CD8-positive, alpha-beta memory T cell (primary cell): ENCODE measurements at regions of chr19 and their contacts with region 1.

Region 1: DNA sequence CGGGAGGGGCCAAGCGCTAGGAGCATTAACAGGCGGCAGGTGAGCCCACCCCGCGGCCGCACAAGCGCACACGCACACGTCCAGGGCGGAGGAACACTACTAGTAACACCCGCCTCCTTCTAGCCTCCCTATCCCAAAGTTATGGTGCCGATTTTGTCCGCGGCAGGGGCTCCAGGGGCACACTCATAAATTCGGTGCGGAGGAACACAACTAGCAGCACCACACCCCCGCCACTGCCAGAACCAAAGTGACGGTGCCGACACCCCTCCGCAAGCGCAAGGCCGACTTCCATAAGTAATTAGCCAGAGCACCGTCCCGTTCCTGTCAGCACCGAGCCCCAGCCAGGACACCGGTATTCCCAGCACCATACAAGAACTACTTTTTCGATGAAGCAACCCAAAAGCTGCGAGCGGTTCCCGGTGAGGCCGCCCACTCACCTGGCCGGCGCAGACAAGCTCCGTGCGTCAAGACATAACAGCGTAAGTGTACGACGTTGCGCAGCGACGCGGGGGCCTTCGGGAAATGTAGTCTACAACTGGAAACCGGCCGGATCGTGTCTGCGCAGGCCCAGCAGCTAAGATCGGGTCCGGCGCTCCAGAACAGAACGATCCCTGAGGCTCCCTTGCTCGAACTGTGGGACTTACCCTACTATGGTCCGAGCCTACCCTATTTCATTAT is at the starts of genes ZNF540 and ZNF571:
- DNase-seq: peak; percentile 82 to 95 (median 87)
- H3K4me3 ChIP-seq: peak within 1 kb of the TSS; percentile 93
- H3K4me3 Mint-ChIP-seq: peak within 1 kb of the TSS; percentile 93 to 98 (median 96)
- H3K27ac ChIP-seq: peak within 1 kb of the TSS; percentile 93
- H3K27ac Mint-ChIP-seq: peak within 1 kb of the TSS; percentile 93 to 100 (median 98)
- H3K4me1 ChIP-seq: peaks cover 19% of the 10 kb centered on the region
- H3K4me1 Mint-ChIP-seq: peaks cover 33 to 57% (median 44%) of the 10 kb centered on the region in 3 donors
- H3K27me3 ChIP-seq: no peaks in the 10 kb centered on the region
- H3K27me3 Mint-ChIP-seq: peaks cover 0 to 4% of the 10 kb centered on the region in 2 donors
- total RNA-seq, gene ZNF540: 2.3 to 3.2 TPM
- total RNA-seq, gene ZNF571: 2.2 to 3.3 TPM

Region 2: GRCh38 chr19:37370880-37371661 is 223.4 kb before region 1 on chr19 and contains the start of gene ZNF527:
- CTCF ChIA-PET with region 1: no interaction called
- POLR2A ChIA-PET with region 1: interaction called, 12 read pairs
- DNase-seq: peak; percentile 95 to 97 (median 96)
- H3K4me3 ChIP-seq: peak within 1 kb of the TSS; percentile 84
- H3K4me3 Mint-ChIP-seq: peak within 1 kb of the TSS; percentile 91 to 100 (median 99)
- H3K27ac ChIP-seq: peak within 1 kb of the TSS; percentile 86
- H3K27ac Mint-ChIP-seq: peak within 1 kb of the TSS; percentile 84 to 99 (median 98)
- H3K4me1 ChIP-seq: peaks cover 13% of the 10 kb centered on the region
- H3K4me1 Mint-ChIP-seq: peaks cover 15 to 23% (median 19%) of the 10 kb centered on the region in 3 donors
- H3K27me3 ChIP-seq: no peaks in the 10 kb centered on the region
- H3K27me3 Mint-ChIP-seq: no peaks in the 10 kb centered on the region
- total RNA-seq, gene ZNF527: 5.2 to 5.6 TPM

Region 3: GRCh38 chr19:37466798-37467607 is 127.4 kb before region 1 on chr19 and contains the start of gene ZNF569:
- CTCF ChIA-PET with region 1: interaction called, 3 read pairs
- POLR2A ChIA-PET with region 1: interaction called, 15 read pairs
- DNase-seq: peak; percentile 78 to 93 (median 91)
- H3K4me3 ChIP-seq: peak within 1 kb of the TSS; percentile 94
- H3K4me3 Mint-ChIP-seq: peak within 1 kb of the TSS; percentile 87 to 99 (median 97)
- H3K27ac ChIP-seq: peak within 1 kb of the TSS; percentile 77
- H3K27ac Mint-ChIP-seq: peak within 1 kb of the TSS; percentile 89 to 98 (median 98)
- H3K4me1 ChIP-seq: peaks cover 24% of the 10 kb centered on the region
- H3K4me1 Mint-ChIP-seq: peaks cover 40 to 49% (median 47%) of the 10 kb centered on the region in 3 donors
- H3K27me3 ChIP-seq: no peaks in the 10 kb centered on the region
- H3K27me3 Mint-ChIP-seq: no peaks in the 10 kb centered on the region
- total RNA-seq, gene ZNF569: 7.4 to 8.0 TPM

Region 4: GRCh38 chr19:37506387-37507166 is 87.9 kb before region 1 on chr19 and contains the start of gene ZNF793:
- CTCF ChIA-PET with region 1: interaction called, 7 read pairs
- POLR2A ChIA-PET with region 1: interaction called, 22 read pairs
- DNase-seq: peak; percentile 63 to 89 (median 82)
- H3K4me3 ChIP-seq: peak within 1 kb of the TSS; percentile 67
- H3K4me3 Mint-ChIP-seq: no peak within 1 kb of the TSS
- H3K27ac ChIP-seq: peak within 1 kb of the TSS; percentile 86
- H3K27ac Mint-ChIP-seq: no peak within 1 kb of the TSS
- H3K4me1 ChIP-seq: peaks cover 9% of the 10 kb centered on the region
- H3K4me1 Mint-ChIP-seq: peaks cover 0 to 4% (median 0%) of the 10 kb centered on the region in 3 donors
- H3K27me3 ChIP-seq: no peaks in the 10 kb centered on the region
- H3K27me3 Mint-ChIP-seq: no peaks in the 10 kb centered on the region
- total RNA-seq, gene ZNF793: 3.9 to 4.1 TPM

Region 5: DNA sequence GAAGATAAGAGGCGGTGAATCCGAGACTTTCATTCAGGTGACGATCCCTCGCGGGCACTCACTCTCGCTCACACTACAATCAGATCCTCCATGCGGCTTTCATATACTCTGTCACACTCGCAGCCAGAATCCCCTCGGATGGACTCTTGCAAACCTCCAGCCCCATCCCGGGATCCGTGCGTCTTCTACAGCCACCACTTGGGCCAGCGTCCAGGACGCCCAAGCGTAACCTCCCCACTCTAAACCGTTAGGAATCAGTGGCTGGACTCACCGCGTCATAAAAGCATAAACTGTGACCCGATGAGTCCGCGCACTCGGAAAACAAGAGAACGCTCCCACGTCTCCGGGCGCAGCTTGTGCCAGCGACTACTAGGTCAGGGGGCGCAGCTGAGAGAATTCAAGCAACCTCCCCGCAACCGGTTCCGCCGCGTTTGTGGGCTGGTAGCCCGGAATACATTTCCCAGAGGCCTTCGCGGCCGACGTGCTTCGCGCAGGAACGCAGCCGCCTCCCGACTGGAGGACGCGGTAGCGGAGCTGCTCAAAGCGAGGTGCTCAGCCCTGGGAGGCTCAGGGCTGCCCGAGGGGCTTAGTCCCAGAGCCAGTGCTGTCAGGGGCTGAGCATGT is 97.5 kb after region 1 on chr19:
- CTCF ChIA-PET with region 1: no interaction called
- POLR2A ChIA-PET with region 1: interaction called, 10 read pairs
- DNase-seq: peak; percentile 47 to 86 (median 74)
- H3K4me3 ChIP-seq: peak overlapping the region; percentile 87
- H3K4me3 Mint-ChIP-seq: peak overlapping the region; percentile 86 to 94 (median 92)
- H3K27ac ChIP-seq: peak overlapping the region; percentile 60
- H3K27ac Mint-ChIP-seq: peak overlapping the region; percentile 72 to 95 (median 90)
- H3K4me1 ChIP-seq: no peaks in the 10 kb centered on the region
- H3K4me1 Mint-ChIP-seq: peaks cover 11 to 12% (median 11%) of the 10 kb centered on the region in 3 donors
- H3K27me3 ChIP-seq: no peaks in the 10 kb centered on the region
- H3K27me3 Mint-ChIP-seq: no peaks in the 10 kb centered on the region

Region 6: GRCh38 chr19:37779127-37780005 is 184.9 kb after region 1 on chr19 and contains the start of gene ZNF573:
- CTCF ChIA-PET with region 1: no interaction called
- POLR2A ChIA-PET with region 1: interaction called, 10 read pairs
- DNase-seq: peak; percentile 69 to 97 (median 84)
- H3K4me3 ChIP-seq: peak within 1 kb of the TSS; percentile 90
- H3K4me3 Mint-ChIP-seq: peak within 1 kb of the TSS; percentile 91 to 99 (median 97)
- H3K27ac ChIP-seq: peak within 1 kb of the TSS; percentile 77
- H3K27ac Mint-ChIP-seq: peak within 1 kb of the TSS; percentile 94 to 99 (median 98)
- H3K4me1 ChIP-seq: peaks cover 13% of the 10 kb centered on the region
- H3K4me1 Mint-ChIP-seq: peaks cover 41 to 49% (median 46%) of the 10 kb centered on the region in 3 donors
- H3K27me3 ChIP-seq: no peaks in the 10 kb centered on the region
- H3K27me3 Mint-ChIP-seq: peaks cover 0 to 1% of the 10 kb centered on the region in 2 donors
- total RNA-seq, gene ZNF573: 9.1 to 16.5 TPM